Activated CD4-positive, alpha-beta T cell treated with anti-CD3 and anti-CD28 coated beads for 36 hours (primary cell): ENCODE measurements at regions of chr1 and their contacts with region 1.

Region 1: DNA sequence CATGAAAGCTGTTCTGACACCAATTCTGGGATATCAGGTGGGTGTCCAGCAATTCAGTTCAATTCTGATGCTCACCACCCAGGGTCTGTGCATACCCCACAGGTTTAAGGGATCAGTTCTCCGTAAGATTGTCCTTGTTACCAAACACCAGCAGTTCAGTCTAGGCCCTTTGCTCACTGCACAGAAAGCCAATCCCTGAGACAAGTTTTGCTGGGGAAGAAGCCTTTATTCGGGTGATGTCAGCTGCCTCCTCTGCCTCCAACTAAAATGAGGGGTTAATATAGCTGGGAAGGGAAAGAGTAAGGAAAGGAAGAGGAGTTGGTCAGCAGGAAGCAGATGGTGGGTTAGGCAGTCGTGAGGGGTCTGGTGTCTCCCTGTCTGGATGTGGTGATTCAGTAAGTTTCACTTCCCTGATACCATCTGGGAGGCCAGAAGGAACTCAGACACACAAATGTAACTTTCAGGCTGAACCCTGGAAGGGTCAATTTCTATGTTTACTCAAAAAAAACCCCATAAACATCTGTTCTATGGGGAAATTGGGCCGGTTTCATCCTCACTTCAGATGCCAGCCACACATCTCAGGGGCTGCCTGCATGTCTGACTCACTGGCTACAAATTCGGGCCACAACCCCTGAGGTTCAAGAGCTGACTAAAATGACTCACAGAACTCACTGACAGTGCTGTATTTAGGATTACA is 83.3 kb upstream of the PGBD5 start:
- DNase-seq: peak; percentile 7
- ATAC-seq: peak; percentile 42
- H3K4me3 Mint-ChIP-seq: no peak overlapping the region
- H3K27ac Mint-ChIP-seq: no peak overlapping the region
- H3K4me1 Mint-ChIP-seq: peaks cover 3% of the 10 kb centered on the region
- H3K27me3 Mint-ChIP-seq: peaks cover 16% of the 10 kb centered on the region

Region 2: GRCh38 chr1:231918239-231919015 is 1409.0 kb after region 1 on chr1:
- CTCF ChIA-PET with region 1: no interaction called
- POLR2A ChIA-PET with region 1: interaction called, 11 read pairs
- intact Hi-C with region 1: no loop called
- DNase-seq: peak; percentile 47
- ATAC-seq: no peak
- H3K4me3 Mint-ChIP-seq: peak overlapping the region; percentile 7
- H3K27ac Mint-ChIP-seq: peak overlapping the region; percentile 58
- H3K4me1 Mint-ChIP-seq: peaks cover 81% of the 10 kb centered on the region
- H3K27me3 Mint-ChIP-seq: peaks cover 2% of the 10 kb centered on the region